ENCODE measurements at regions of chr11 and their contacts with region 1.

Region 1: DNA sequence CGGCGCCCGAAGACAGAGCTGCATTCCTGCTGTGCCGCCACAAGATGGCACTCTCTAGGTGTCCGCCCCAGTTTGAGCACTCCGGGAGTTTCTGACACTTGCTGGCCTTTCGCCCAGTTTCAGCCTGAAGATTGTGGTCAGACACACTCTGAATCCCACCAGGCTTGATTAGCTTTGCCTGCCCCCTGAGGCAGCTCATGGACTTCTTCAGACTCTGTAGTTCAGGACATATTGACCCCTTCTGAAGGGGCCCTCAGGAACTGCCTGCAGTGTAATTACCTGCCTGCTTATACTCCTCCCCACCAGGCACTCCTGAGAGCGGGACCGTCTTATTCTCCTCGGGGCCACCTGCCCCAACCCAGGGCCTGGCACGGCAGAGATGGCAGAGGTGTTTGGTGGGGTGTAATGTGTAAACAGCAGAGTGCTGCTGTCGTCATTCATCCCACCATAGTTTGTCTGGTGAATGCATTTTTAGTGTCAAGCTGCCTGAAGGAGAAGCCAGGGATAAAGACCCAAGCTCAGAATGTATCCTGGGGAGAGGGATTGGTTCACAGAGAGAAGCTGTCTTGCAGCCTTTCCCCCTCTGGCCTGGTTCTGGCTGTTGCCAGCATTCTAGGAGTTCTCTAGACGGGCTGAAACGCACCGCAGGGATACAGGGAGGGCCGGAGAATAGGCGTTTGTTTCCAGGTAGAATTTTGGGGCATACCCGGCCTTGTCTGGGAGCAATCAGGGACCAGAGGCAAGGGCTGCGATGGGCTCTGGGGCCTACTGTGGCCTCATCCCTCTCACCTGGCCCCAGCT is 46.4 kb downstream of the EIF3F start:
- DNase-seq: peak; percentile 58 to 70
- ATAC-seq: peak; percentile 70 to 92; a peak in 5 of 6 replicates
- H3K4me3 ChIP-seq: no peak overlapping the region
- H3K27ac ChIP-seq: no peak overlapping the region
- H3K4me1 ChIP-seq: no peaks in the 10 kb centered on the region
- CTCF ChIP-seq: peak; percentile 84
- EP300 ChIP-seq: no peak
- POLR2A ChIP-seq: no peak
- RAD21 ChIP-seq: peak; percentile 74 to 79

Region 2: DNA sequence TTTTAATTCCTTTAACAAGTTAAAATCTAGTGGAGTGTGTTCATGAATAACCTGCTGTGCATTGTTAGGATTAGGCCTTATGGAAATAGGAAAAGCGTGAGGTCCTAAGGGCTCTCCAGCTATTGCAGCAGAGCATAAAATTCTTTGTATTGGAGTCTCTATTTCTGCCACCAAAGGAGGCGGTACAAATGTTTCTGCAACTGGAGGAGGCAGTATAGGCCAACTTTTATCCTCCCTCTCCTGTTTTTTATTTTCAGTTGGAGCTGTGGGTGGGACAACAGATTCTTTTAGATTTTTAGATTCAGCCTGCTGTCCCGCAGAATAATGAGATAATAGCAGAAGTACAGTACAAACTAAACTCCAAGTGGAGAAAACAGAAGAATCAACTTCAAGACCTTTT is 128.6 kb before region 1 on chr11:
- CTCF ChIA-PET with region 1: no interaction called
- POLR2A ChIA-PET with region 1: no interaction called
- DNase-seq: no peak
- ATAC-seq: no peak
- H3K4me3 ChIP-seq: no peak overlapping the region
- H3K27ac ChIP-seq: no peak overlapping the region
- H3K4me1 ChIP-seq: no peaks in the 10 kb centered on the region
- CTCF ChIP-seq: no peak
- EP300 ChIP-seq: no peak
- POLR2A ChIP-seq: no peak
- RAD21 ChIP-seq: no peak

Region 3: DNA sequence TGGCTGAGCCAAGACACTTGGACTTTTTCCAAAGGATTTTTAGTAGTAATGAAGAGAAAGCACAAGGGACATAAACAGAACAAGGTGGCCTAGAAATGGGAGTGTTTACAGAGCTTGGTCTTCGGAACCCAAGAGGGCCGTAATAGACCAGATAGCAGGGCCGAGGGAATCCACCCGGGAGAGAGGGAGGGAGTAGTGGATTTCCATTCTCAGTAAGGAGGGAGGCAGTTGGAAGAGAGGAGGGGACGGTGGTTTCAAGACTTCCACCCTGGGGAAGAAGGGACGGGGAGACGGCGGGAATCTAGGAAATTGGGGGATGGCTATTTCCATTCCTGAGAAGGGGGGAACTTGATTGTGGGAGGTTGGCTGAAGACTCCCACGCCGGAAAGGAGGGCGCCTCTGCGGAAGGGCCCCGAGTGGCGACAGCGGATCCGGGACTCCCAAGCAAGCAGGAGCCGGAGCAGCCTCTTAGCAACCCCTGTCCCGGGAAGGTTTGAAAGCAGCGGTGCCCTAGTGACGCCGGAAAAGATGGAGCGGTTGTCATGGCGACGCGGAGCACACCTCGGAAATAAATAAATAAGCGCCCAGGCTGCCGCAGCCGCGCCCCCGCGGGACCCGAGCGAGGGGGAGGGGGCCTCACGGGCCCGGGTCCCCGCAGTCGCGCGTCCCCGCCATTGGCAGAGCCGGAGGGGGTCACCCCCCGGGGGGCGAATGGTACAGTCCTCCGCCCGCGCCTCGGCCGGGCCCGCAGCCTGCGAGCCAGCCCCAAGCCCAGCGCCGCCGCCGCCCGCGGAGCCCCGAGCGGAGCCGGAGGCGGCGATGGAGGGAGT is 14.8 kb before region 1 on chr11:
- CTCF ChIA-PET with region 1: interaction called, 43 read pairs
- POLR2A ChIA-PET with region 1: no interaction called
- DNase-seq: peak; percentile 32 to 51
- ATAC-seq: peak; percentile 75 to 83
- H3K4me3 ChIP-seq: peak overlapping the region; percentile 61
- H3K27ac ChIP-seq: peak overlapping the region in 1 of 2 experiments; percentile 71; a peak in 3 of 6 replicates
- H3K4me1 ChIP-seq: no peaks in the 10 kb centered on the region; the same call in 2 of the 3 replicates
- CTCF ChIP-seq: no peak
- EP300 ChIP-seq: no peak
- POLR2A ChIP-seq: no peak
- RAD21 ChIP-seq: no peak

Region 4: DNA sequence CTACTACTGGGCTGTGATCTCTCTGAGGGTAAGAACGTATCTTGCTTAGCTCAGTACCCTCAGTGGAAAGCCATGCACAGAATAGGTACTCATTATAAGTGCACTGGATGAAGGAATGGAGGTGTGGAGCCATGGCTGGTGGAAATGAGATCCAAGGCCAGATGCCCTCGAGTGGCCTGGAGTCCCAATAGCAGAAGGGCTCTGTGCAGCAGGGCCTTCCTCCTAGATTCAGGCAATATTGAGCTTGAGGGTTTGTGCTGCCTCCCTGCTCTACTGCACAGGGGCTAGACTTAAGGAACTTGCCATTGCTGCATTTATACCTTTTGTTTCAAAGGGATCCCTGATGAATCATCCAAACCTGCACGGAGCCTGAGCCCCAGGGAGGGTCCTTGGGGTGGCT is 13.9 kb after region 1 on chr11:
- CTCF ChIA-PET with region 1: interaction called, 19 read pairs
- POLR2A ChIA-PET with region 1: no interaction called
- DNase-seq: no peak
- ATAC-seq: no peak
- H3K4me3 ChIP-seq: no peak overlapping the region
- H3K27ac ChIP-seq: no peak overlapping the region
- H3K4me1 ChIP-seq: no peaks in the 10 kb centered on the region
- CTCF ChIP-seq: no peak
- EP300 ChIP-seq: no peak
- POLR2A ChIP-seq: no peak
- RAD21 ChIP-seq: no peak

Region 5: GRCh38 chr11:8056810-8057463 is 23.4 kb after region 1 on chr11:
- CTCF ChIA-PET with region 1: interaction called, 57 read pairs
- POLR2A ChIA-PET with region 1: no interaction called
- DNase-seq: no peak
- ATAC-seq: no peak
- H3K4me3 ChIP-seq: no peak overlapping the region
- H3K27ac ChIP-seq: no peak overlapping the region
- H3K4me1 ChIP-seq: no peaks in the 10 kb centered on the region
- CTCF ChIP-seq: no peak
- EP300 ChIP-seq: no peak
- POLR2A ChIP-seq: no peak
- RAD21 ChIP-seq: no peak

Region 6: GRCh38 chr11:8070417-8071115 is 37.1 kb after region 1 on chr11:
- CTCF ChIA-PET with region 1: interaction called, 49 read pairs
- POLR2A ChIA-PET with region 1: no interaction called
- DNase-seq: peak; percentile 34 to 84
- ATAC-seq: peak; percentile 65 to 82
- H3K4me3 ChIP-seq: no peak overlapping the region
- H3K27ac ChIP-seq: no peak overlapping the region
- H3K4me1 ChIP-seq: peaks cover 18% of the 10 kb centered on the region
- CTCF ChIP-seq: peak; percentile 28
- EP300 ChIP-seq: no peak
- POLR2A ChIP-seq: no peak
- RAD21 ChIP-seq: peak; percentile 44 to 52

Region 7: DNA sequence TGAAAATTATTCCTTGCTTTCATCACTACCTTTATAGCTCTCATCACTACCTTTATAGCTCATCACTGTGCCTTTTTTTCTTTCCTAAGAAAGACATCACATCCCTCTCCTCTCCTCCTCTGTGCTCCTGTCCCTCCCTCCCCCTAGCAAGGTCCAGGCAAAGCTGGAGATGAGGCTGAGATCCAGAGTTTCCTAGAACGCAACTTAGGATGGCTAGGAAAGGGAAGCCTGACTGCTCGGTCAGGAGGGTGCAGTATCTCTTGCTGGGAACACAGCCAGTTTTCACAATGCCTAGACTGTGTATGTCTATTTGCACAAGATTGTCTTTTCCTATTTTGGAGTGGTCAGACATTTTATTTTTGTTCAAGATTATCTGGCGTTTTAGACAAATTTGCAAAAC is 72.2 kb after region 1 on chr11:
- CTCF ChIA-PET with region 1: interaction called, 644 read pairs
- POLR2A ChIA-PET with region 1: no interaction called
- DNase-seq: no peak
- ATAC-seq: no peak
- H3K4me3 ChIP-seq: no peak overlapping the region
- H3K27ac ChIP-seq: no peak overlapping the region
- H3K4me1 ChIP-seq: no peaks in the 10 kb centered on the region
- CTCF ChIP-seq: no peak
- EP300 ChIP-seq: no peak
- POLR2A ChIP-seq: no peak
- RAD21 ChIP-seq: no peak

Measured in A549 (cell line).